ENCODE measurements at regions of chr11 and their contacts with region 1.

Region 1: DNA sequence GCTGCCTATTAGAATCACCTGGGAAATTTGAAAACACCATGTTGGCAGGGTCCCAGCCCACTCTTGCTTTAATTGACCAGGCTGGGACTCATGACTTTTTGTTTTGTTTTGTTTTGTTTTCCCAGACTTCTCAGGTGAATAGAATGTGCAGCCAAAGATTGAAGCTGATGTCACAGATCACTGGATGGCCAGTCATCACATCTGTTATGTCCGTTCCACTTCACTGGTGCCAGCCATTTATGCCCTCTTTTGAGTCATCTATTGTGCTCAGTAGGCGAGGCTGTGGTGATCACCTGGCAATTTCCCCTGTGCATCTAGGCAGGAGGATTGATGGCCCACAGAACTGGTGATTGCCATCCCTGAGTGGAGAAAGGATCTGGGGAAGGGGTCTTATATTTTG is 297.3 kb downstream of the INSC start:
- DNase-seq: no peak
- H3K4me3 ChIP-seq: no peak overlapping the region
- H3K27ac ChIP-seq: no peak overlapping the region
- H3K4me1 ChIP-seq: no peaks in the 10 kb centered on the region
- H3K27me3 ChIP-seq: no peaks in the 10 kb centered on the region
- CTCF ChIP-seq: no peak
- EP300 ChIP-seq: no peak
- POLR2A ChIP-seq: no peak

Region 2: GRCh38 chr11:16690086-16690485 is 1278.0 kb after region 1 on chr11:
- intact Hi-C with region 1: loop called in 1 of 4 experiments (anchors 10 kb)
- DNase-seq: no peak
- H3K4me3 ChIP-seq: no peak overlapping the region
- H3K27ac ChIP-seq: no peak overlapping the region
- H3K4me1 ChIP-seq: no peaks in the 10 kb centered on the region
- H3K27me3 ChIP-seq: no peaks in the 10 kb centered on the region
- CTCF ChIP-seq: no peak
- EP300 ChIP-seq: no peak
- POLR2A ChIP-seq: no peak